Activated T-helper 2 cell treated with anti-CD3 and anti-CD28 coated beads, Interferon-gamma antibody, Interleukin-2, Interleukin-4, amounts not matched to agents 10 μg/mL and 5 μg/mL and 100 μg/mL, durations not matched to agents 14 hours and 24 hours and 36 hours (primary cell): ENCODE measurements at regions of chr2 and their contacts with region 1.

Region 1: GRCh38 chr2:61538200-61538919 is at the start of gene XPO1:
- DNase-seq: peak; percentile 99
- H3K4me3 Mint-ChIP-seq: peak within 1 kb of the TSS; percentile 99
- H3K27ac Mint-ChIP-seq: peak within 1 kb of the TSS; percentile 100
- H3K4me1 Mint-ChIP-seq: peaks cover 23% of the 10 kb centered on the region
- H3K27me3 Mint-ChIP-seq: no peaks in the 10 kb centered on the region
- total RNA-seq, gene XPO1: 218 and 221 TPM in 2 replicates

Region 2: DNA sequence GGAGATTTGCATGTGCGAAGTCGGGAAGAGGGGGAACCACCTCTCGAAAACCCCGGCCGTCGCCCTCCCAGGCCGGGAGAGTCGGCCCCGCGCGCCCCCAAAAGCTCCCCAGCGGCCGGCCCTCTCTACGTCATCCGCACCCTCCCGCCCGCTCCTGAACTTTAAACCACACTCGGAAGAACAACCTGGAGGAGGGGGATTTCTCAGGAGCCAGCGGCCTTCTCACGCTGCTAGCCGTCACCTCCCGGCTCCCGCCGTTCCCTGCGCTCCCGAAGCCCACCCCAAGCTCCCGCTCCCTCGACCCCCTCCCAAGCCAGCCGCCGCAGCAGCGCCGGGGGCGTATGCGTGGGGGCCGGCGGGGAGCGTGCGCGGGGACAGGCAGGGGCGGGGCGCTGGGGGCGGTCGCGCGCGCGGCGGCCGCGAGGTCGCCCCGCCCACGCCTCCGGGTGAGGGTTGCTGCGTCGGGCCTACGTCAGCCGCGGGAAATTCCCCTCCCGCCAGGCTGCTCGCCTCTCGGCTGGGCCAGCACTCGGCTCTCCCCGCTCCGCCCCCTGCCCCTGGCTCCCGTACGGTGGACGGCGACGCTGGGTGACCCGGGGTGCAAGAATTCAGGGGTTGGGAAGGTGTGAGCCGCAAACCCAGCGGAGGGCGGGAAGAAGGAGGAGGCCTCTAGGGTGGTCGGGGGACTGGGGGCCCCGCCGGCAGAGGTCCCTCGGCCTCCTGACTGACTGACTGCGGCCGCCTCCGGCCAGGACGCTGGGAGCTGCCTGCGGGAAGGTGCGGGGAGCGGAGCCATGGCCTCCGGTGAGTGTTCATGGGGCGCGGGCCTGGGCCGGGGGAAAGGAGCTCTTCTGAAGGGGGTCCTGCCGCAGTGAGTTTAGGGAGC is 657.1 kb before region 1 on chr2 and contains the start of gene REL:
- intact Hi-C with region 1: loop called (anchors 5 kb)
- DNase-seq: peak; percentile 87
- H3K4me3 Mint-ChIP-seq: peak within 1 kb of the TSS; percentile 99
- H3K27ac Mint-ChIP-seq: peak within 1 kb of the TSS; percentile 97
- H3K4me1 Mint-ChIP-seq: peaks cover 25% of the 10 kb centered on the region
- H3K27me3 Mint-ChIP-seq: no peaks in the 10 kb centered on the region
- total RNA-seq, gene REL: 118 and 123 TPM in 2 replicates

Region 3: DNA sequence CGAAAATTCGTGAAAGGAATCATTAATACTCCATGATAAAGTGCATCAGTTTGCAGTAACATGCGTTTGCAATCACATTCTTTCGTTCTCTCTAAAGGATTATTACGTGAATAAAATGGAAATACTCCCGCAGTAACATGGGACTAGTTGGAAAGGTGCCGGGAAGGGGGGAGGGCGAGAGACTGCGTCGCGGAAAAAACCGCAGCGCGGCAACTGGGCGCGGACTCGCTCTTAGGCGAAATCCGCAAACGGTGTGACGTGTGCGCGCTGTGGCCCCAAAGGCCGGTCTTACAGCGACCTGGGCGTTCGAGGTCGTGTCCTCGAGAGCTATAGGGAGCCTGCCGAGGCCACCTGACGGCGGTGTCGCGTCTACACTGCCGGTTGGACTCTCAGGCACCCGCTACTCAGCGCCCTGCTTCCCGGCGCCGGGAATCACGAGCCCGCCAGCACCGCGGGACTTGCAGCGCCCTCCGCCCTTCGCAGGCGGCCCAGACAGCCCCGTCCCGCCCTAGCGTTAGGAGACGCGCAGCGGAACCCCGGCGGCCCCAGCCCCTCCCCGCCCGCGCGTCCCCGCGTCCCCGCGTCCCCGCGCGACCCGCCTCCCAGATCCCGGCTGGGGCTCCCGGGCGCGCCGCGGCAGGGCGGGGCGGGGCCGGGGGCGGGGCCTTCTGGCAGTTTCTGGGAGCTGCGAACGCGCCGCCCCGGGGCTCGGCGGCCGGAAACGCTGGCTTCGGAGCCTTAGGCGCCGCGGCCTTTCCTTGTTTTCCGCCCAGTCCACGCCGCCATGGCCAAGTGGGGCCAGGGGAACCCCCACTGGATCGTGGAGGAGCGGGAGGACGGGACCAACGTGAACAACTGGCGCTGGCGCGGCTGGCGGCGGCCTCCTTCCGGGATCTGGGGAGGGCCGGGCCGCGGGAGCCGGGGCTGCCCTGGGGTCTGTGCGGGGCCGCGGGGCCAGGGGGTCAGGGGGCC is 361.3 kb before region 1 on chr2:
- intact Hi-C with region 1: loop called (anchors 1 kb)
- DNase-seq: peak; percentile 92
- H3K4me3 Mint-ChIP-seq: peak overlapping the region; percentile 92
- H3K27ac Mint-ChIP-seq: peak overlapping the region; percentile 83
- H3K4me1 Mint-ChIP-seq: peaks cover 43% of the 10 kb centered on the region
- H3K27me3 Mint-ChIP-seq: peaks cover 6% of the 10 kb centered on the region

Region 4: GRCh38 chr2:61470965-61471904 is 67.1 kb before region 1 on chr2 and contains the start of gene USP34:
- intact Hi-C with region 1: loop called (anchors 1 kb)
- DNase-seq: peak; percentile 91
- H3K4me3 Mint-ChIP-seq: peak within 1 kb of the TSS; percentile 92
- H3K27ac Mint-ChIP-seq: peak within 1 kb of the TSS; percentile 93
- H3K4me1 Mint-ChIP-seq: peaks cover 24% of the 10 kb centered on the region
- H3K27me3 Mint-ChIP-seq: no peaks in the 10 kb centered on the region
- total RNA-seq, gene USP34: 87.4 and 89.3 TPM in 2 replicates

Region 5: GRCh38 chr2:61588566-61588965 is 50.2 kb after region 1 on chr2:
- intact Hi-C with region 1: no loop called
- DNase-seq: no peak
- H3K4me3 Mint-ChIP-seq: no peak overlapping the region
- H3K27ac Mint-ChIP-seq: no peak overlapping the region
- H3K4me1 Mint-ChIP-seq: no peaks in the 10 kb centered on the region
- H3K27me3 Mint-ChIP-seq: peaks cover 8% of the 10 kb centered on the region

Region 6: DNA sequence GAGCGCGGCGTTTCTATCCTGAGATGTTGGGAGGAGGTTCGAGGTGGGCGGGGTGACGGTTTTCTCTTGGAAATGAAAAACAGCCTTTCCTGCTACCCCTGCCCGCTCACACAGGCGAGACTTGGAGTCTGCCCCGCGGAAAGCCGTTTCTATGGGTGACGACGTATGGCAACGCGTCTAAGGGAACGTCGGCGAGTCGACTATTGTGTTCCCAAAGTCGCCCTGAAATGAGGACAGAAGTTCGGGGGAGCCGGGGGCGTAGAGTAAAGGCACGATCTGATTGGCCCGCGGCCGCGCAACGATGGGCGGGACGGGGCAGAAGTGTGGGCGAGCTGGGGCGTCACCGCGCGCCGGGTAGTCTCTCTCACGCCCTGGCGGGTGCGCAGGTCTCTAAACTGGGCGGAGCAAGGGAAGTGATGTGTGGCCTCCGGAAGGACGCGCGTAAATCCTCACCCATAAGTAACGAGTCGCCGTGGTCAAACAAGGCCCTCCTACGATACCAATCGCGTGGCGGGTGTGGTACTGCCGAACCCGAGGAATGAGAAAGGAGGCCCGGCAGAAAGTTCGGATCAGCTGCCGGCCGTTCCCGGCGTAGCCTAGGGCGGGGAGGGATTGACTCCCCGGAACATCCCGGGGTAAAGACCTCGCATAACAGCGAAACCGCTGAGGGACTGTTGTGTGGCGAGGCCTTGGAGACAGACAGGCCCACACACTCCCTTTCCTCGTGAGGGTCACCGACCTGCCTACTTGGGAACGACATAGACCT is 225.9 kb after region 1 on chr2:
- intact Hi-C with region 1: loop called (anchors 1 kb)
- DNase-seq: peak; percentile 96
- H3K4me3 Mint-ChIP-seq: peak overlapping the region; percentile 89
- H3K27ac Mint-ChIP-seq: peak overlapping the region; percentile 94
- H3K4me1 Mint-ChIP-seq: peaks cover 15% of the 10 kb centered on the region
- H3K27me3 Mint-ChIP-seq: no peaks in the 10 kb centered on the region

Region 7: GRCh38 chr2:62195421-62196277 is 657.3 kb after region 1 on chr2 and contains the start of gene B3GNT2:
- intact Hi-C with region 1: loop called (anchors 5 kb)
- DNase-seq: peak; percentile 74
- H3K4me3 Mint-ChIP-seq: peak within 1 kb of the TSS; percentile 90
- H3K27ac Mint-ChIP-seq: peak within 1 kb of the TSS; percentile 91
- H3K4me1 Mint-ChIP-seq: peaks cover 32% of the 10 kb centered on the region
- H3K27me3 Mint-ChIP-seq: peaks cover 11% of the 10 kb centered on the region
- total RNA-seq, gene B3GNT2: 29.0 and 29.3 TPM in 2 replicates